Activated CD4-positive, alpha-beta T cell treated with anti-CD3 and anti-CD28 coated beads for 36 hours (primary cell): ENCODE measurements at regions of chr1 and their contacts with region 1.

Region 1: GRCh38 chr1:109548321-109549267 is at the start of gene GNAI3:
- DNase-seq: peak; percentile 97
- ATAC-seq: peak; percentile 97
- H3K4me3 Mint-ChIP-seq: peak within 1 kb of the TSS; percentile 99
- H3K27ac Mint-ChIP-seq: peak within 1 kb of the TSS; percentile 96
- H3K4me1 Mint-ChIP-seq: peaks cover 49% of the 10 kb centered on the region
- H3K27me3 Mint-ChIP-seq: no peaks in the 10 kb centered on the region
- total RNA-seq, gene GNAI3: 7.1 to 9.6 TPM

Region 2: DNA sequence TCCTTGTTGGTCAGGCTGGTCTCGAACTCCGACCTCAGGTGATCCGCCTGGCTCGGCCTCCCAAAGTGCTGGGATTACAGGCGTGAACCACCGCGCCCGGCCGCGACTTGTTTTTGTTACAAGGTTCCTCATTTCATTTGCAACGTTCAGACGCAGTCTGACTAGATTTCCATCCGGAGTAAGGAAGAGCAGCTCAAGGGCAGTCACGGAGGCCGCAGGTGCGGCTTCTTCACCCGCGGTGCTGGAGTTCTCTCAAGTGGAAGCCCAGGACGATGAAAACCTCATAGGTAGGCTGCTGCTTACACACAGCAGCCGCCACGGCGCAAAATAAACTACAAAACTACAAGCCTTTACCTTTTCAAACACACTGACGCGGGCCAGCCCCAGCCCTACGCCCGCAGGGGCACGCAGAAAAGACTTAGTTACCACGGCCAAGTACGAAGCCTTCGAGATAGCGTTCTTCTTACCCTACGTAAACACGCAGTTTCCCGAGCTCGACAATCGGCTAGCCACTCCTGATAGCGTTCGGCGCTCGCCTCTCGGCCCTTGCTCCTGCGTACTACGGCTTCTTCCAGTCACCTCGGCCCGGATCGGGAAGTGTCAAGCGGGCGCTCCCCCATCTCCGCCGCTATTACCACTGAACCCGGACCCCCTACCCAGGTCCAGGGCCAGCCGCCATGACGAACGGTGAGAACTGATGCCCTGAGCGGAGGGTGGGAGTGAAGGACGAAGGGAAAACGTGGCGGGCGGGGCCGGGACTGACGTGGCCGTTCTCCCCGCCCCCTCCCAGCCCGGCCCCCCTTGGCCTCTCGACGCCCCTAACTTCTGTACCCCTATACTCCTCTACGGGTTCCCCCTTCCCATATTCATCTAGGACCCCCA is 458.2 kb before region 1 on chr1 and contains the start of gene TMEM167B:
- CTCF ChIA-PET with region 1: no interaction called
- POLR2A ChIA-PET with region 1: no interaction called
- intact Hi-C with region 1: loop called in 1 of 2 experiments (anchors 5 kb)
- DNase-seq: peak; percentile 95
- ATAC-seq: peak; percentile 88
- H3K4me3 Mint-ChIP-seq: peak within 1 kb of the TSS; percentile 85
- H3K27ac Mint-ChIP-seq: peak within 1 kb of the TSS; percentile 84
- H3K4me1 Mint-ChIP-seq: peaks cover 30% of the 10 kb centered on the region
- H3K27me3 Mint-ChIP-seq: no peaks in the 10 kb centered on the region
- total RNA-seq, gene TMEM167B: 26.8 to 28.4 TPM

Region 3: DNA sequence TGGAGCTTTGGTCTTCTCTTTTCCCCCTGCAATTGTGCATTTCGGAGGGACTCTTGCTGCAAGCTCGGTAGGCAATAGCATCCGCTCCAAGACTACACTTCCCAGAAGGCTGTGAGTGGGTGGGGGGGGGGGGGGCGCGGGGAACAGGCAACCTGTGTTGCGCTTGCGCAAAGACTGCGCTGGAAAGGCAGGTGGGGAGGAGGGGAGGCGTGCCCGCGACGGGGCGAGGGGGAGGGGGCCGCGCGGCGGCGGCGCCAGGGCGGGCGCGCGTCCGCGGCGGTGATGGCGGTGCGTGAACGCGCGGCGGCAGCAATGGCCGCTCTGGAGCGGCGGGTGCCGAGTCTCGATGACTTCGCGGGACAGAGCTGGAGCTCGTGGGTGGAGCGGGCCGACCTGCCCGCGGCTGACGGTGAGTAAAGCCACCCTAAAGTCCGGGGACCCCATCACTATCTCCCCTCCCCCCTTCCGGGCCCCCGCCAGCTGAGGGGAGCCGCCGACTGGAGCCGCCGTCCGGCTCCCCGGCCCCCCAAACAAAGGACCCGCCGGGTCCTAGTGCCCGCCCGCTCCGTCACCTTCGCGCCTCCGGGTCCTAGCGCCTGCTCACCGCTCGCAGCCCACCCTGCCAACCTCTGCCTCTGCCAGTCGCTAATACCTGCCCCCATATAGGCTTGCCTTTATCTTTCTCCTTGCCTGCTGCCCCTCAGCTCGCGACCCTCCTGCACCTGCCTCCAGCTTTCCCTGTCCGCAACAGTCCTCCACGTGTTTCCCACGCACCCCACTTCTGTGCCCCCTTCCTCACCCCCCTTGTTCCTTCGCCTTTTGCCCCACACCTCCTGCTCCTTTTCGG is 64.7 kb before region 1 on chr1 and contains the start of gene ATXN7L2:
- CTCF ChIA-PET with region 1: interaction called, 3 read pairs
- POLR2A ChIA-PET with region 1: no interaction called
- intact Hi-C with region 1: loop called in 1 of 2 experiments (anchors 1 kb)
- DNase-seq: peak; percentile 96
- ATAC-seq: peak; percentile 79
- H3K4me3 Mint-ChIP-seq: peak within 1 kb of the TSS; percentile 88
- H3K27ac Mint-ChIP-seq: peak within 1 kb of the TSS; percentile 96
- H3K4me1 Mint-ChIP-seq: peaks cover 33% of the 10 kb centered on the region
- H3K27me3 Mint-ChIP-seq: no peaks in the 10 kb centered on the region
- total RNA-seq, gene ATXN7L2: 11.7 to 13.0 TPM

Region 4: GRCh38 chr1:109564194-109564878 is 15.7 kb after region 1 on chr1:
- CTCF ChIA-PET with region 1: interaction called, 15 read pairs
- POLR2A ChIA-PET with region 1: interaction called, 8 read pairs
- intact Hi-C with region 1: no loop called
- DNase-seq: no peak
- ATAC-seq: no peak
- H3K4me3 Mint-ChIP-seq: no peak overlapping the region
- H3K27ac Mint-ChIP-seq: peak overlapping the region; percentile 55
- H3K4me1 Mint-ChIP-seq: peaks cover 67% of the 10 kb centered on the region
- H3K27me3 Mint-ChIP-seq: no peaks in the 10 kb centered on the region

Region 5: DNA sequence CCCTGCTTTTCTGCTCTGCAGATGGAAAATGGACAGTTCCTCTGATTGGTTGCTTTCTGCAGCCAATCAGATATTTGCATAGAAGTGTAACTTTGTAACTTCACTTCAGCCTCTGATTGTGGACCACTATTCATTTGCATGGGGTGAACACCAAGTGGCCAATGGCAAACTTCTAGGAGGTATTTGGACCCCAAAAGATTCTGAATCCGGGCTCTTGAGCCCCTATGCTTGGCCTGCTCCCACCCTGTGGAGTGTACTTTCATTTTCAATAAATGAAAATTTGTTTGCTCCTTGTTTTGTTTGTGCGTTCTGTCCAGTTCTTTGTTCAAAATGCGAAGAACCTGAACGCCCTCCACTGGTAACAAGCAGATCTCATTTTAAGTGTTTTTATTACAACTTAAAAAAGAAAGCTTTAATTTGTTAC is 100.9 kb after region 1 on chr1:
- CTCF ChIA-PET with region 1: interaction called, 26 read pairs
- POLR2A ChIA-PET with region 1: no interaction called
- intact Hi-C with region 1: no loop called
- DNase-seq: no peak
- ATAC-seq: no peak
- H3K4me3 Mint-ChIP-seq: no peak overlapping the region
- H3K27ac Mint-ChIP-seq: no peak overlapping the region
- H3K4me1 Mint-ChIP-seq: no peaks in the 10 kb centered on the region
- H3K27me3 Mint-ChIP-seq: peaks cover 3% of the 10 kb centered on the region

Region 6: DNA sequence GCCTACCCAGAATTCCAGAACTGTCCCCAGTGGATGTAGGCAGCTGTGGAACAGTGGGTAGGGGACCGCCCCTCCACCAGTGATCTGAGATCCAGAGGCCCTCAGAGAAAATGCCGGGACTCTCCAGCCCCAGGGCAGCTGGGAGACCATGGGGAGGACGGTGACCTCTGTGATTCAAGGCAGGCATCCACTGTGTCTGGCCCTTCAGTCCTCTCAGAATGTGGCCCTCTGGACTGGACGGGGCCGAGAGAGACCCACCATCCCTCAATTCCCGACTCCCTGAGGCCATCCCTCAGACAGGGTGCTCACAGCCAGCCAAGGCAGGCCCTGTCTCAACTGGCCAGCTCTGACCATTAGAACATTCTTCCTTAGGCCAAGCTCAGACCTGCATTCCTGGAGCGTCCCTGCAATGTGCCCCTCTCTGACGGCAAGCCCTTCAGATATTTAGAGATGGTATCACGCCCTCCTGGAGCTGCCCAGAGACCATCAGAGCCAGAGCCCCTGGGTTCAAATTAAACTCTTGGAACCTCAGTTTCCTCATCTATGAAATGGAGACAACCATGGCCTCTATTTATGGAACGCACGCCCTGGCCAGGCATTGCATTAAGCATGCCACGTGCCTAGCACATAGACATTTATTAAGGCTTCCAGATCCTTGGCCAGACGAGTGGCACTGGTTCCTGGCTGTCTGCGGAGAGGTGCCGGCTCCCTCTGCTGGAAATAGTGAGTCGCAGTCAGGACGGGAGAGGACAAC is 224.7 kb after region 1 on chr1:
- CTCF ChIA-PET with region 1: interaction called, 45 read pairs
- POLR2A ChIA-PET with region 1: no interaction called
- intact Hi-C with region 1: loop called (anchors 1 kb)
- DNase-seq: peak; percentile 85
- ATAC-seq: peak; percentile 88
- H3K4me3 Mint-ChIP-seq: no peak overlapping the region
- H3K27ac Mint-ChIP-seq: no peak overlapping the region
- H3K4me1 Mint-ChIP-seq: no peaks in the 10 kb centered on the region
- H3K27me3 Mint-ChIP-seq: no peaks in the 10 kb centered on the region